A549 (cell line): ENCODE measurements at regions of chr17 and their contacts with region 1.

Region 1: GRCh38 chr17:32253117-32253611 is 12.5 kb upstream of the RHBDL3 start:
- DNase-seq: peak; percentile 80 to 84
- ATAC-seq: peak; percentile 98
- H3K4me3 ChIP-seq: no peak overlapping the region
- H3K27ac ChIP-seq: no peak overlapping the region
- H3K4me1 ChIP-seq: no peaks in the 10 kb centered on the region
- CTCF ChIP-seq: peak; percentile 99
- EP300 ChIP-seq: no peak
- POLR2A ChIP-seq: no peak
- RAD21 ChIP-seq: peak; percentile 98 to 100

Region 2: GRCh38 chr17:31558748-31559644 is 694.2 kb before region 1 on chr17:
- CTCF ChIA-PET with region 1: no interaction called
- POLR2A ChIA-PET with region 1: no interaction called
- DNase-seq: peak; percentile 82 to 91
- ATAC-seq: peak; percentile 85 to 86
- H3K4me3 ChIP-seq: peak overlapping the region; percentile 81
- H3K27ac ChIP-seq: peak overlapping the region; percentile 97 to 98
- H3K4me1 ChIP-seq: peaks cover 31% of the 10 kb centered on the region
- CTCF ChIP-seq: peak; percentile 99
- EP300 ChIP-seq: no peak
- POLR2A ChIP-seq: peak; percentile 67
- RAD21 ChIP-seq: peak; percentile 71 to 96

Region 3: DNA sequence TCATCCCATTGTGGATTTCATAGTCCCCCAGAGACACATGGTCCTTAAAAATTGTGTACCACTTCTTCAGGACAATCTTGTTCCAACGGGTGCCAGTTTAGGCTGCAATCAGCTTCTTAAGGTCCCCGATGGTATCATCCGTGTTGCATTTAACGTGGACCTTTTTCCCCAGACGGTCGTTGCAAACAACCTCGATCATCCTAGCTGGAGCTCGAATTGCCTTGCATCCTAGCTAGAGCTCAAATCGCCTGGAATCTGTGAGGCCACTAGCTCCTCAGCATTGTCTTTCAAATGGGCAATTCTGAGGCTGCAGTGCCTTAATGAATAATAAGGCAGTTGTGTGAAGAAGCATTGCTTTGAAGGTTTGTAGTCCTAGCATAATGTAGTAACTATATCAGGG is 25.3 kb before region 1 on chr17:
- CTCF ChIA-PET with region 1: interaction called, 14 read pairs
- POLR2A ChIA-PET with region 1: no interaction called
- DNase-seq: no peak
- ATAC-seq: no peak
- H3K4me3 ChIP-seq: no peak overlapping the region
- H3K27ac ChIP-seq: no peak overlapping the region
- H3K4me1 ChIP-seq: peaks cover under 1% of the 10 kb centered on the region; the same call in 2 of the 3 replicates
- CTCF ChIP-seq: no peak
- EP300 ChIP-seq: no peak
- POLR2A ChIP-seq: no peak
- RAD21 ChIP-seq: no peak

Region 4: GRCh38 chr17:32265192-32265923 is 12.2 kb after region 1 on chr17 and contains the start of gene RHBDL3:
- CTCF ChIA-PET with region 1: interaction called, 49 read pairs
- POLR2A ChIA-PET with region 1: interaction called, 7 read pairs
- DNase-seq: peak in 1 of 2 experiments; percentile 55
- ATAC-seq: peak; percentile 42 to 47
- H3K4me3 ChIP-seq: peak within 1 kb of the TSS; percentile 89
- H3K27ac ChIP-seq: peak within 1 kb of the TSS; percentile 55 to 84
- H3K4me1 ChIP-seq: peaks cover 38% of the 10 kb centered on the region
- CTCF ChIP-seq: no peak
- EP300 ChIP-seq: no peak
- POLR2A ChIP-seq: no peak; the same call in 1 of the 2 replicates
- RAD21 ChIP-seq: no peak
- polyA plus RNA-seq, gene RHBDL3: 2.0 and 3.1 TPM in 2 replicates

Region 5: GRCh38 chr17:32277281-32277680 is 24.1 kb after region 1 on chr17:
- CTCF ChIA-PET with region 1: interaction called, 12 read pairs
- POLR2A ChIA-PET with region 1: no interaction called
- DNase-seq: no peak
- ATAC-seq: peak; percentile 14 to 31; a peak in 2 of 6 replicates
- H3K4me3 ChIP-seq: no peak overlapping the region
- H3K27ac ChIP-seq: no peak overlapping the region; a peak in 1 of 6 replicates
- H3K4me1 ChIP-seq: peaks cover 57% of the 10 kb centered on the region
- CTCF ChIP-seq: no peak
- EP300 ChIP-seq: no peak
- POLR2A ChIP-seq: no peak
- RAD21 ChIP-seq: no peak

Region 6: GRCh38 chr17:32311028-32311536 is 57.9 kb after region 1 on chr17:
- CTCF ChIA-PET with region 1: interaction called, 259 read pairs
- POLR2A ChIA-PET with region 1: no interaction called
- DNase-seq: no peak
- ATAC-seq: peak in 1 of 2 experiments; percentile 13; a peak in 1 of 6 replicates
- H3K4me3 ChIP-seq: no peak overlapping the region
- H3K27ac ChIP-seq: no peak overlapping the region
- H3K4me1 ChIP-seq: no peaks in the 10 kb centered on the region
- CTCF ChIP-seq: no peak
- EP300 ChIP-seq: no peak
- POLR2A ChIP-seq: no peak
- RAD21 ChIP-seq: no peak

Region 7: DNA sequence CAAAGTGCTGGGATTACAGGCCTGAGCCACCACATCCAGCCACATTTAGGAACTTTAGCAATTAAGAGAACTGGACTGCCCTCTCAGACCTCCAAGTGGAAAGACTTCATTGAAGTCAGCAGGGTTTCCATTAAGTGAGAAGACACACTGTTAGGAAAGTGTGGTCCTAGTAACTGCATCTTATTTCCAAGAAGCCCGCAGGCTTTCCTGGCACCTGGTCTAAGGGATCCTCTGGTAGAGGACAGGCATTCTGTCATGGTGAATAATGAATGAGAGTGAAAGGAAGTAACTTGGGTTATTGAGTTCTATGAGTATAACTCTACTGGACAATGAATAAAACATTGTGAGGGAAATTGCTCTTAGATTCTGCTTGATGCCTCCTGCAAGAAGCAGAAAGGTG is 74.7 kb after region 1 on chr17:
- CTCF ChIA-PET with region 1: interaction called, 259 read pairs
- POLR2A ChIA-PET with region 1: no interaction called
- DNase-seq: no peak
- ATAC-seq: no peak
- H3K4me3 ChIP-seq: no peak overlapping the region
- H3K27ac ChIP-seq: no peak overlapping the region
- H3K4me1 ChIP-seq: no peaks in the 10 kb centered on the region
- CTCF ChIP-seq: no peak
- EP300 ChIP-seq: no peak
- POLR2A ChIP-seq: no peak
- RAD21 ChIP-seq: no peak